Activated CD4-positive, alpha-beta T cell treated with anti-CD3 and anti-CD28 coated beads for 36 hours (primary cell): ENCODE measurements at regions of chr12 and their contacts with region 1.

Region 1: GRCh38 chr12:93378373-93379325 is 924 bp downstream of the NUDT4 start:
- DNase-seq: peak; percentile 76
- ATAC-seq: peak; percentile 66
- H3K4me3 Mint-ChIP-seq: peak overlapping the region; percentile 98
- H3K27ac Mint-ChIP-seq: peak overlapping the region; percentile 99
- H3K4me1 Mint-ChIP-seq: peaks cover 42% of the 10 kb centered on the region
- H3K27me3 Mint-ChIP-seq: no peaks in the 10 kb centered on the region

Region 2: DNA sequence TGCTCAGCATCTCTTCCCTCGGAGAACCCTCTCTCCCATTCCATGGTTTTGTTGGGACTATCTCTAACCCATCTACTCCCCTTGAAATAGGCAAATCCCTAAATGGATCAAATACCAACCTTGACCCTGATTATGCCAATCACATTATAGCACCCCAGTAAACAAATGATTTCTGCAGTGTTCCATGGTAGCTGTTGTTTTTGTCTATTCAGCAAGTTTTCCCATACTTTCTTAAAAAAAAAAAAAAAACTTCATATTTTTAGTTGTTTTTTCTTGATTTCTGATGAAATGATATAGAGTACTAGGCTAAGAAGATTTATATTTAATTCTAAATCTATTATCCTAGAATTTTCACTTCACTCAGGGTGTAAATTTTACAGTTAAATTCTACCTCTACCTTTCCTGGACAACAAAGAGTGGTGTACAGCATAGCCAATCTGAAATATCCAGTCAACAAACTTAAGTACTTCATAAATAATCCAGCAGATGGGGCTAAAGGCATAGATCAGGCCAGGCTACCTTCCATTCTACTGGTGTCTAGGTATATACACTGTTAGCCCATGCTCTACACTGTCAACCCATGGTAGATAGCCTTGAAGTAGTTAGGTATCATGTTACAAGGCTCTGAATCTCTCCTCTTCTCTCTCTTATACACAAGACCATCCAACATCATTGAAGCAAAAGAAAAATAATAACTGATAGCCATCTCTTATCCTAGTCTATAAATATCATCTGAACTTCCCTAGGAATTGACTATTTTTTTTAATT is 593.7 kb before region 1 on chr12:
- CTCF ChIA-PET with region 1: no interaction called
- POLR2A ChIA-PET with region 1: no interaction called
- intact Hi-C with region 1: loop called in 1 of 2 experiments (anchors 10 kb)
- DNase-seq: peak; percentile 33
- ATAC-seq: peak; percentile 98
- H3K4me3 Mint-ChIP-seq: no peak overlapping the region
- H3K27ac Mint-ChIP-seq: no peak overlapping the region
- H3K4me1 Mint-ChIP-seq: peaks cover 2% of the 10 kb centered on the region
- H3K27me3 Mint-ChIP-seq: no peaks in the 10 kb centered on the region

Region 3: GRCh38 chr12:93109551-93110203 is 269.0 kb before region 1 on chr12:
- CTCF ChIA-PET with region 1: interaction called, 3 read pairs
- POLR2A ChIA-PET with region 1: no interaction called
- intact Hi-C with region 1: loop called in 1 of 2 experiments (anchors 1 kb)
- DNase-seq: peak; percentile 75
- ATAC-seq: peak; percentile 93
- H3K4me3 Mint-ChIP-seq: no peak overlapping the region
- H3K27ac Mint-ChIP-seq: peak overlapping the region; percentile 89
- H3K4me1 Mint-ChIP-seq: peaks cover 26% of the 10 kb centered on the region
- H3K27me3 Mint-ChIP-seq: no peaks in the 10 kb centered on the region

Region 4: GRCh38 chr12:93352321-93352720 is 26.3 kb before region 1 on chr12:
- CTCF ChIA-PET with region 1: no interaction called
- POLR2A ChIA-PET with region 1: no interaction called
- intact Hi-C with region 1: no loop called
- DNase-seq: no peak
- ATAC-seq: no peak
- H3K4me3 Mint-ChIP-seq: no peak overlapping the region
- H3K27ac Mint-ChIP-seq: no peak overlapping the region
- H3K4me1 Mint-ChIP-seq: no peaks in the 10 kb centered on the region
- H3K27me3 Mint-ChIP-seq: no peaks in the 10 kb centered on the region

Region 5: DNA sequence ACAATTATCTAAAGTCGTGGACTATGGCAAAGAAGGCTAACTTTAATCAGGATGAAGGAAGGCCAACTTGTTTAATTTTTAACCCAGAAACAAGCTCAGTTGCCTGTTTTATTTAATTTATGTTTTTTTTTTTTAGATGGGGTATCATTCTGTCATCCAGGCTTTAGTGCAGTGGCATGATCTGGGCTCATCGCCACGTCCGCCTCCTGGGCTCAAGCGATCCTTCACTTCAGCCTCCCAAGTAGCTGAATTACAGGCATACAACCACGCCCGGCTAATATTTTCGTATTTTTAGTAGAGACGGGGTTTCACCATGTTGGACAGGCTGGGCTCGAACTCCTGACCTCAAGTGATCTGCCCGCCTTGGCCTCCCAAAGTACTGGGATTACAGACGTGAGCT is 18.8 kb after region 1 on chr12:
- CTCF ChIA-PET with region 1: interaction called, 15 read pairs
- POLR2A ChIA-PET with region 1: no interaction called
- intact Hi-C with region 1: no loop called
- DNase-seq: no peak
- ATAC-seq: no peak
- H3K4me3 Mint-ChIP-seq: no peak overlapping the region
- H3K27ac Mint-ChIP-seq: no peak overlapping the region
- H3K4me1 Mint-ChIP-seq: peaks cover 4% of the 10 kb centered on the region
- H3K27me3 Mint-ChIP-seq: no peaks in the 10 kb centered on the region

Region 6: GRCh38 chr12:93467351-93468007 is 88.8 kb after region 1 on chr12 and contains the start of gene MRPL42:
- CTCF ChIA-PET with region 1: interaction called, 3 read pairs
- POLR2A ChIA-PET with region 1: no interaction called
- intact Hi-C with region 1: loop called in 1 of 2 experiments (anchors 1 kb)
- DNase-seq: peak; percentile 95
- ATAC-seq: peak; percentile 91
- H3K4me3 Mint-ChIP-seq: peak within 1 kb of the TSS; percentile 95
- H3K27ac Mint-ChIP-seq: peak within 1 kb of the TSS; percentile 93
- H3K4me1 Mint-ChIP-seq: peaks cover 29% of the 10 kb centered on the region
- H3K27me3 Mint-ChIP-seq: no peaks in the 10 kb centered on the region
- total RNA-seq, gene MRPL42: 78.7 to 98.3 TPM